Endothelial cell of umbilical vein (primary cell): ENCODE measurements at regions of chr3 and their contacts with region 1.

Region 1: GRCh38 chr3:108552267-108553159 is 36.7 kb downstream of the CIP2A start:
- DNase-seq: peak; percentile 68
- H3K4me3 ChIP-seq: no peak overlapping the region
- H3K27ac ChIP-seq: no peak overlapping the region
- H3K4me1 ChIP-seq: peaks cover 12% of the 10 kb centered on the region
- H3K27me3 ChIP-seq: no peaks in the 10 kb centered on the region
- CTCF ChIP-seq: peak; percentile 21 to 31
- POLR2A ChIP-seq: no peak

Region 2: GRCh38 chr3:107938143-107938542 is 614.4 kb before region 1 on chr3:
- CTCF ChIA-PET with region 1: interaction called, 15 read pairs
- POLR2A ChIA-PET with region 1: no interaction called
- dilution Hi-C with region 1: no loop called
- intact Hi-C with region 1: no loop called
- DNase-seq: peak; percentile 70
- H3K4me3 ChIP-seq: no peak overlapping the region
- H3K27ac ChIP-seq: no peak overlapping the region
- H3K4me1 ChIP-seq: peaks cover 13% of the 10 kb centered on the region
- H3K27me3 ChIP-seq: no peaks in the 10 kb centered on the region
- CTCF ChIP-seq: peak; percentile 28 to 55
- POLR2A ChIP-seq: no peak

Region 3: GRCh38 chr3:108489771-108490170 is 62.7 kb before region 1 on chr3:
- CTCF ChIA-PET with region 1: interaction called, 122 read pairs
- POLR2A ChIA-PET with region 1: no interaction called
- dilution Hi-C with region 1: no loop called
- intact Hi-C with region 1: loop called (anchors 1 kb)
- DNase-seq: peak; percentile 75
- H3K4me3 ChIP-seq: no peak overlapping the region
- H3K27ac ChIP-seq: no peak overlapping the region
- H3K4me1 ChIP-seq: peaks cover 12% of the 10 kb centered on the region
- H3K27me3 ChIP-seq: no peaks in the 10 kb centered on the region
- CTCF ChIP-seq: peak; percentile 51 to 57
- POLR2A ChIP-seq: no peak

Region 4: GRCh38 chr3:108528459-108529252 is 23.9 kb before region 1 on chr3:
- CTCF ChIA-PET with region 1: interaction called, 10 read pairs
- POLR2A ChIA-PET with region 1: no interaction called
- dilution Hi-C with region 1: no loop called
- intact Hi-C with region 1: no loop called
- DNase-seq: no peak
- H3K4me3 ChIP-seq: no peak overlapping the region
- H3K27ac ChIP-seq: no peak overlapping the region
- H3K4me1 ChIP-seq: no peaks in the 10 kb centered on the region
- H3K27me3 ChIP-seq: peaks cover 2 to 3% of the 10 kb centered on the region in 2 experiments
- CTCF ChIP-seq: no peak
- POLR2A ChIP-seq: no peak

Region 5: DNA sequence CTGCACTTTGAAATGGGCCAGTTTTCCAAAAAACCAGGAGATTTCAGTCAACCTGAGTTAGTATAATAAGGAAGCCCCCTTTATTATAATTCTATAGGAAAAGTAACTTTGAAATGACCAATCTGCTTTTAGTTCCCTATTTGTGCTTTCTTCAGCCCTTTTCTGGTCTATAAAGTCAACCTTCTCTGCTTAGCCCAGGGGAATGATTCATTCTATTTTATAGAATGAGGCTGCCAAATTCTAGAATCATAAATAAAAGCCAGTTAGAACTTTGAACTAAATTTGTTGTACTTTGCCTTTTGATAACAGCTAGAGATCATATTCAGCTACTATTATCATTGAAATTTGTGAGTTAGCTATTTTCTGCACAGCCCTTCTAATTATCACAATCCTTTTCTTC is 12.1 kb after region 1 on chr3:
- CTCF ChIA-PET with region 1: interaction called, 38 read pairs
- POLR2A ChIA-PET with region 1: no interaction called
- dilution Hi-C with region 1: no loop called
- intact Hi-C with region 1: no loop called
- DNase-seq: peak; percentile 33
- H3K4me3 ChIP-seq: no peak overlapping the region
- H3K27ac ChIP-seq: no peak overlapping the region
- H3K4me1 ChIP-seq: peaks cover 13% of the 10 kb centered on the region
- H3K27me3 ChIP-seq: no peaks in the 10 kb centered on the region
- CTCF ChIP-seq: no peak
- POLR2A ChIP-seq: no peak